T-cell (primary cell): ENCODE measurements at regions of chr3 and their contacts with region 1.

Region 1: GRCh38 chr3:112111785-112112402 is 21.2 kb downstream of the GCSAM start:
- DNase-seq: peak; percentile 22 to 85 (median 51)
- ATAC-seq: peak; percentile 88 to 94 (median 92)
- H3K4me3 ChIP-seq: no peak overlapping the region
- H3K4me3 Mint-ChIP-seq: no peak overlapping the region
- H3K27ac ChIP-seq: no peak overlapping the region
- H3K27ac Mint-ChIP-seq: no peak overlapping the region
- H3K4me1 ChIP-seq: peaks cover 4 to 5% of the 10 kb centered on the region in 2 experiments
- H3K4me1 Mint-ChIP-seq: peaks cover 0 to 15% (median 6%) of the 10 kb centered on the region in 3 donors
- H3K27me3 ChIP-seq: no peaks in the 10 kb centered on the region
- H3K27me3 Mint-ChIP-seq: no peaks in the 10 kb centered on the region

Region 2: GRCh38 chr3:112128843-112129727 is 17.2 kb after region 1 on chr3:
- CTCF ChIA-PET with region 1: interaction called, 10 to 25 read pairs
- POLR2A ChIA-PET with region 1: no interaction called
- DNase-seq: peak in 34 of 35 experiments; percentile 22 to 86 (median 48)
- ATAC-seq: peak; percentile 76 to 83 (median 80)
- H3K4me3 ChIP-seq: no peak overlapping the region
- H3K4me3 Mint-ChIP-seq: peak overlapping the region in 2 of 3 donors; percentile 2 to 64
- H3K27ac ChIP-seq: peak overlapping the region; percentile 83
- H3K27ac Mint-ChIP-seq: peak overlapping the region; percentile 82
- H3K4me1 ChIP-seq: peaks cover 47 to 75% of the 10 kb centered on the region in 2 experiments
- H3K4me1 Mint-ChIP-seq: peaks cover 88 to 89% (median 89%) of the 10 kb centered on the region in 3 donors
- H3K27me3 ChIP-seq: no peaks in the 10 kb centered on the region
- H3K27me3 Mint-ChIP-seq: no peaks in the 10 kb centered on the region

Region 3: GRCh38 chr3:112293368-112294321 is 181.8 kb after region 1 on chr3 and contains the start of gene SLC9C1:
- CTCF ChIA-PET with region 1: interaction called, 16 to 25 read pairs
- POLR2A ChIA-PET with region 1: no interaction called
- DNase-seq: peak in 22 of 35 experiments; percentile 11 to 75 (median 26)
- ATAC-seq: peak; percentile 65 to 85 (median 73)
- H3K4me3 ChIP-seq: peak within 1 kb of the TSS in 1 of 2 donors; percentile 10
- H3K4me3 Mint-ChIP-seq: peak within 1 kb of the TSS; percentile 63 to 69 (median 64)
- H3K27ac ChIP-seq: no peak within 1 kb of the TSS
- H3K27ac Mint-ChIP-seq: peak within 1 kb of the TSS in 1 of 2 donors; percentile 62
- H3K4me1 ChIP-seq: peaks cover 0 to 3% of the 10 kb centered on the region in 2 experiments
- H3K4me1 Mint-ChIP-seq: peaks cover 19 to 28% (median 24%) of the 10 kb centered on the region in 3 donors
- H3K27me3 ChIP-seq: no peaks in the 10 kb centered on the region
- H3K27me3 Mint-ChIP-seq: no peaks in the 10 kb centered on the region
- total RNA-seq, gene SLC9C1: not detected

Region 4: GRCh38 chr3:112321867-112322649 is 210.2 kb after region 1 on chr3:
- CTCF ChIA-PET with region 1: interaction called, 7 to 12 read pairs
- POLR2A ChIA-PET with region 1: no interaction called
- DNase-seq: no peak
- ATAC-seq: no peak
- H3K4me3 ChIP-seq: no peak overlapping the region
- H3K4me3 Mint-ChIP-seq: no peak overlapping the region
- H3K27ac ChIP-seq: no peak overlapping the region
- H3K27ac Mint-ChIP-seq: no peak overlapping the region
- H3K4me1 ChIP-seq: no peaks in the 10 kb centered on the region
- H3K4me1 Mint-ChIP-seq: no peaks in the 10 kb centered on the region
- H3K27me3 ChIP-seq: no peaks in the 10 kb centered on the region
- H3K27me3 Mint-ChIP-seq: peaks cover 6 to 7% of the 10 kb centered on the region in 2 donors

Region 5: GRCh38 chr3:112505907-112506306 is 394.0 kb after region 1 on chr3:
- CTCF ChIA-PET with region 1: no interaction called
- POLR2A ChIA-PET with region 1: no interaction called
- DNase-seq: no peak
- ATAC-seq: no peak
- H3K4me3 ChIP-seq: no peak overlapping the region
- H3K4me3 Mint-ChIP-seq: no peak overlapping the region
- H3K27ac ChIP-seq: no peak overlapping the region
- H3K27ac Mint-ChIP-seq: no peak overlapping the region
- H3K4me1 ChIP-seq: peaks cover 0 to 4% of the 10 kb centered on the region in 2 experiments
- H3K4me1 Mint-ChIP-seq: peaks cover 21 to 31% (median 22%) of the 10 kb centered on the region in 3 donors
- H3K27me3 ChIP-seq: no peaks in the 10 kb centered on the region
- H3K27me3 Mint-ChIP-seq: no peaks in the 10 kb centered on the region

Region 6: GRCh38 chr3:112531358-112531781 is 419.5 kb after region 1 on chr3:
- CTCF ChIA-PET with region 1: interaction called, 4 to 16 read pairs
- POLR2A ChIA-PET with region 1: interaction called in 1 of 2 experiments, 4 read pairs
- DNase-seq: peak in 1 of 35 experiments; percentile 60
- ATAC-seq: no peak
- H3K4me3 ChIP-seq: no peak overlapping the region
- H3K4me3 Mint-ChIP-seq: no peak overlapping the region
- H3K27ac ChIP-seq: no peak overlapping the region
- H3K27ac Mint-ChIP-seq: peak overlapping the region; percentile 57 to 75
- H3K4me1 ChIP-seq: no peaks in the 10 kb centered on the region
- H3K4me1 Mint-ChIP-seq: peaks cover 0 to 4% (median 3%) of the 10 kb centered on the region in 3 donors
- H3K27me3 ChIP-seq: no peaks in the 10 kb centered on the region
- H3K27me3 Mint-ChIP-seq: no peaks in the 10 kb centered on the region